AG04449 (cell line): ENCODE measurements at regions of chr6 and their contacts with region 1.

Region 1: DNA sequence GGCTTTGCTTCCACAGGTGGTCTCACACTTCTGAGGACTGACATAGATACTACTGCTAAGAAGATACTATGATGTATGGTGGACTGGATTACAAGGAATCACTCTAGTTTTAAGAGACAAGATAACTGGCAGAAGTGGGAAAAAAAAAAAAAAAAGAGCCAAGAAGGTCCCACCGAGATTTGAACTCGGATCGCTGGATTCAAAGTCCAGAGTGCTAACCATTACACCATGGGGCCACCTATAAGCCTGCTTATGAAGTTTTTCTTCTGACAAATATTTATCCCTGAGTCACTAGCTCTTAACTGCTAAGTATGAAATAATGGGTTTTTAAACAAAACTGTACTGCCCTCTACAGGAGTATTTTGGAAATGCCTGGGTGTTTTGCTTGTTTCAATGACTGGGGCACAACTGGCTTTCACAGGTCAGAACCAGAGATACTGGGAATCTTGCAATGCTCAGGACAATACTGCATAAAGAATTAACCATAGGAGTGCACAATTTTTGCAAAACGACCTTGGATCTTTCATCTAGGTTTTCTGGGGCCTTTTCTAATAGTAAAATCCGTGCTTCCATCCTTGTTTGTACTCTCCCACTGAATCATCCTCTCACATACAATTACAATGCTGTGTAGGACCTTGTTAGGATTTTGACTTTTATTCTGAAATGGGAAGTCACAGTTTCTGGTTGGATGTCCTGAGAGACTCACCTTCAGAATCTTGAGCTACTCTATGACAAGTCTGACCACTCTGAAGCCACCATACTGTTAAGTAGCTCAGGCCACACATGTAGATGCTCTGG is 116.3 kb downstream of the OR2B2 start:
- DNase-seq: peak; percentile 63
- H3K4me3 ChIP-seq: no peak overlapping the region
- CTCF ChIP-seq: peak; percentile 44

Region 2: GRCh38 chr6:27132532-27133280 is 663.2 kb before region 1 on chr6:
- CTCF ChIA-PET with region 1: interaction called, 50 read pairs
- POLR2A ChIA-PET with region 1: no interaction called
- DNase-seq: peak; percentile 100
- H3K4me3 ChIP-seq: peak overlapping the region; percentile 65
- CTCF ChIP-seq: no peak

Region 3: GRCh38 chr6:27518881-27519795 is 276.8 kb before region 1 on chr6:
- CTCF ChIA-PET with region 1: interaction called, 16 read pairs
- POLR2A ChIA-PET with region 1: no interaction called
- DNase-seq: peak; percentile 63
- H3K4me3 ChIP-seq: peak overlapping the region; percentile 78
- CTCF ChIP-seq: peak; percentile 76

Region 4: GRCh38 chr6:27624694-27625262 is 171.1 kb before region 1 on chr6:
- CTCF ChIA-PET with region 1: no interaction called
- POLR2A ChIA-PET with region 1: no interaction called
- DNase-seq: no peak
- H3K4me3 ChIP-seq: no peak overlapping the region
- CTCF ChIP-seq: no peak

Region 5: DNA sequence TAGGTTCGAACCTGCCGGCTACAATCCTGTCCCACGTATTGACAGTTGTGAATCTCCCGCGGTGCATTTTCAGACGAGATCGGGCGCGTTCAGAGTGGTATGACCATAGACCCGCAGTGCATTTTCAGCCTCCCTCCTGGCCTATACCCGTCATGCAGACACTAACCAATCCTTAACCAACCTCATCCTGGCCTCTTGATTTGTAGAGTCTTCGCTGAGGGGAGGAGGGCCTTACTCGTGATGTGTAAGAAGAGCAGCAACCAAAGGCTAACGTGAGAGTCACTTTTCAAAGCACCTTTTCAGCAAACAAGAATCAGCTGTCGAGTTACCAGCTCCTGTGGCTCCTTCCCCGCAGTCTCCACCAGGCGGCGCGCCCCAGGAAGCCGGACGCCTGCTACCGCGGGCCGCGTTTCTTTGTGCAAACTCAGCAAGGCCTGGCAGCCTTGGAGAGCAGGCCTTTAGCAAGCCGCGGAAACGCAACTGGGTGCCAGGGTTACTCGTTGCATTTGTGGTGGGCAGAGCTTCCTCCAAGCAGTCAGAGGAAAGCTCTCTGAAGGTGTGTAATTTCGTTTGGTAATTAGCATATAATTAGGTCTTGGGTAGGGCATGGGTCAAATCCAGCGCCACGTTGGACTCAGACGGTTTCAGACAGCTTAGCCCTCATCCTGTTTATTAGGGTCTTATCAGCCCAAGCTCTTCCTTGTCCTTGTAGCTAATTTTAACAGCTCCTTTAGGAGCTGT is 23.5 kb before region 1 on chr6:
- CTCF ChIA-PET with region 1: interaction called, 132 read pairs
- POLR2A ChIA-PET with region 1: no interaction called
- DNase-seq: peak; percentile 37
- H3K4me3 ChIP-seq: peak overlapping the region; percentile 36
- CTCF ChIP-seq: peak; percentile 98

Region 6: GRCh38 chr6:27809939-27810767 is 14.3 kb after region 1 on chr6:
- CTCF ChIA-PET with region 1: interaction called, 38 read pairs
- POLR2A ChIA-PET with region 1: interaction called, 8 read pairs
- DNase-seq: peak; percentile 91
- H3K4me3 ChIP-seq: peak overlapping the region; percentile 85
- CTCF ChIP-seq: peak; percentile 29